Activated T-helper 1 cell treated with anti-CD3 and anti-CD28 coated beads, Interleukin-12 subunit alpha, Interleukin-12 subunit beta, Interleukin-2, Interleukin-4 antibody, amounts not matched to agents 30 ng/mL and 10 ng/mL and 1 ng/mL, durations not matched to agents 14 hours and 24 hours and 36 hours (primary cell): ENCODE measurements at regions of chr3 and their contacts with region 1.

Region 1: DNA sequence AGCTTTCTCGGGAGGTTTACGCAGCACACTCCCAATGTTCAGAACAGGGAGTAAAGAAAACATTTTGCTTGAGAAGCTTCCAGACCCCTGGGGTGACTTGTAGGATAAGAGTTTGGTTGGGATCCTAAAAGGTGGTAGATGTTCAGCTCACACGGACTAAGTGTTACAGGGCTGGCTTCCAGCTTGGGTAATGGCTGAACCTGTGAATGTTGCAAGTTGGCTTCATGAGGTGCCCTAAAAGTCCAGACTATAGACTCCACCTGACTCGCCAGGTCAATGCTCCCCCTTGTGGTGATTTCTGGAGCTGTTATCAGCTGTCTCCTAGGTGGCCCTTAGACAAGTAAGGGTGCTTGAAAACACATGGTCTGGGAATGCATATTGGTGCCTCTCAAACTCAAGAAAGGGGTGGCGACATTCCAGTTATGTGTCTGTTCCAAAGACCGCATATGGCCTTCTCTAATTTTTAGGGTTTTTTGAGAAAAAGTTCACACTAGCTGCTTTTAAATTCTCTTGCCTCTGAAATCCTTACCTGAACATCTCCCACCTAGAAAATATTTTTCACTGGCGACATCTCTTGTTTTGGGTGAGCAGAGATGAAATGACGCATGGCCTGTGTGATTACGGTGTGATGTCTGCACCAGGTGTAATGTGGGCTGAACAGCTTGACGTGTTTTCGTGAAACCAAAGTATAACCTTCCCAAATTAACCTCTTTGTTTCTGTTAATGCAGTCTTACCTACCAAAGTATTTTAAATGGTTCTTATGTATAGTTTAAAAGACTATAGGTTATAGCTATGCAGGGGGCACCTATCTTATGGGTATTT is 175.7 kb upstream of the KBTBD8 start:
- DNase-seq: peak; percentile 50
- H3K4me3 Mint-ChIP-seq: no peak overlapping the region
- H3K27ac Mint-ChIP-seq: no peak overlapping the region
- H3K4me1 Mint-ChIP-seq: no peaks in the 10 kb centered on the region
- H3K27me3 Mint-ChIP-seq: peaks cover 6% of the 10 kb centered on the region

Region 2: GRCh38 chr3:66253790-66254620 is 568.4 kb before region 1 on chr3:
- intact Hi-C with region 1: loop called (anchors 1 kb)
- DNase-seq: no peak
- H3K4me3 Mint-ChIP-seq: no peak overlapping the region
- H3K27ac Mint-ChIP-seq: no peak overlapping the region
- H3K4me1 Mint-ChIP-seq: no peaks in the 10 kb centered on the region
- H3K27me3 Mint-ChIP-seq: no peaks in the 10 kb centered on the region

Region 3: DNA sequence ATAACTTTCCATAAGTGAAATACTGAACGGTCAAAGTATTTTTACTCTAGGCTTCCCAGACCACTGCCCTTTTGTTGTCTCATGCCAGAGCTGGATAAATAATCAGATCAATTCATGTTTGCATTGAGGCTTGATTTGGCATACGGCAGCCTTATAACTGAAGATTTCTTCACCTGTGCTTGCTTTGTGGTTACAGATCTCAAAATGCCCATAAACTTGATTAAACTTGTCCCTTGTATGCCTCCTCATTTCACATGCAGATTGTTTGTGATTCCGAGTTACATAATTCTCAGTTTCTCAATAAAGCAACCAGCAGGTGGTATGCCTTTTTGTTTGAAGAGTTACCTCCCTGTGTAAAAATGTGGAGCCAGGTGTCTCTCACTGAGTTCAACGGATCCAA is 110.2 kb before region 1 on chr3:
- intact Hi-C with region 1: no loop called
- DNase-seq: no peak
- H3K4me3 Mint-ChIP-seq: no peak overlapping the region
- H3K27ac Mint-ChIP-seq: no peak overlapping the region
- H3K4me1 Mint-ChIP-seq: no peaks in the 10 kb centered on the region
- H3K27me3 Mint-ChIP-seq: peaks cover 6% of the 10 kb centered on the region